IMR-90 (cell line): ENCODE measurements at regions of chr17 and their contacts with region 1.

Region 1: GRCh38 chr17:48555258-48556228 is 10.6 kb upstream of the HOXB2 start:
- DNase-seq: peak; percentile 99
- ATAC-seq: peak; percentile 22
- H3K4me3 ChIP-seq: peak overlapping the region; percentile 48
- H3K27ac ChIP-seq: peak overlapping the region; percentile 93
- H3K4me1 ChIP-seq: peaks cover 56% of the 10 kb centered on the region
- H3K27me3 ChIP-seq: no peaks in the 10 kb centered on the region
- CTCF ChIP-seq: 0 out of 2 replicates have a peak, but pooled peaks have one; percentile 4
- POLR2A ChIP-seq: no peak
- RAD21 ChIP-seq: no peak; the same call in 1 of the 2 replicates

Region 2: DNA sequence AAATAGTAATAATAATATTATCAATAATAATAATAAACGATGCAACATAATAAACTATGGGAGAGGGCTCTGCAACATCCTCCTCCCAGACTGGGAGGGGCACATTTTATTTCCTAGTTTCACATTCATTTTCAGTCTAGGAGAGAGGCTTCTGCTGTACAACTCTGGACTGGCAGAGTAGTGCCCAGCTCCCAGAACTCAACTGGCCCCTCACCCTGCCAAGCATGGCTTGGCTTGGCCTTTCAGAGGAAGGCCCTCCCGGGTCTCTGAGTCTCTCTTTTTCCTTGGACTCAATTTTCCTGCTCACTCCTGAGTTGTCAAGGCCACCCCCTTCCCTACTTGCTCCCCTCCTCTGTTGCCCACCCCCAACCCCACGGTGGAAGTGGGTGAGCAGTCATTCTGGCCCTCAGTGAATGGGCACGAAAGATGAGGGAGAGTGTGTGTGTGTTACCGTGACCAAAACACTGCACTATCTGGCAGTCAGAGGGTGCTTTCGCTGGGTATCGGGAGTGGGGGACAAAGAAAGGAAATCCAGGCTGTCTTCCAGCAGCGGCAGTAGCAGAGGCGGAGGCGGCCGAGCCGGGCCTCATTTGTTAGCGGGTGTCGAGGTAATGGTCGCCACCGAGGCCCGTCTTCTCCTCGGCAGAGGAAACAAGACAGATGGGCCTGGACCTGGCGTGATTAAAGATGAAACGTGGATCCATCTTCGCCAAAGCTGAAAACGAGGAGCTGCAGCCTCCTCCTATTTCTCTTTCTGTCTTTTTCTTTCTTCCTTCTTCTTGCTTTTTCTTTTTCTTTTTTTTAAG is 20.3 kb after region 1 on chr17:
- CTCF ChIA-PET with region 1: no interaction called
- POLR2A ChIA-PET with region 1: interaction called, 3 read pairs
- dilution Hi-C with region 1: no loop called
- in situ Hi-C with region 1: no loop called
- intact Hi-C with region 1: loop called (anchors 2 kb)
- DNase-seq: peak; percentile 67
- ATAC-seq: no peak
- H3K4me3 ChIP-seq: peak overlapping the region; percentile 40
- H3K27ac ChIP-seq: peak overlapping the region; percentile 99
- H3K4me1 ChIP-seq: peaks cover 20% of the 10 kb centered on the region
- H3K27me3 ChIP-seq: no peaks in the 10 kb centered on the region
- CTCF ChIP-seq: no peak
- POLR2A ChIP-seq: 0 out of 2 replicates have a peak, but pooled peaks have one; percentile 27
- RAD21 ChIP-seq: no peak

Region 3: GRCh38 chr17:48586355-48587258 is 31.1 kb after region 1 on chr17:
- CTCF ChIA-PET with region 1: interaction called, 8 read pairs
- POLR2A ChIA-PET with region 1: interaction called, 14 read pairs
- dilution Hi-C with region 1: no loop called
- in situ Hi-C with region 1: no loop called
- intact Hi-C with region 1: no loop called
- DNase-seq: peak; percentile 41
- ATAC-seq: no peak
- H3K4me3 ChIP-seq: peak overlapping the region; percentile 91
- H3K27ac ChIP-seq: peak overlapping the region; percentile 99
- H3K4me1 ChIP-seq: peaks cover 12% of the 10 kb centered on the region
- H3K27me3 ChIP-seq: no peaks in the 10 kb centered on the region
- CTCF ChIP-seq: no peak
- POLR2A ChIP-seq: no peak
- RAD21 ChIP-seq: no peak

Region 4: DNA sequence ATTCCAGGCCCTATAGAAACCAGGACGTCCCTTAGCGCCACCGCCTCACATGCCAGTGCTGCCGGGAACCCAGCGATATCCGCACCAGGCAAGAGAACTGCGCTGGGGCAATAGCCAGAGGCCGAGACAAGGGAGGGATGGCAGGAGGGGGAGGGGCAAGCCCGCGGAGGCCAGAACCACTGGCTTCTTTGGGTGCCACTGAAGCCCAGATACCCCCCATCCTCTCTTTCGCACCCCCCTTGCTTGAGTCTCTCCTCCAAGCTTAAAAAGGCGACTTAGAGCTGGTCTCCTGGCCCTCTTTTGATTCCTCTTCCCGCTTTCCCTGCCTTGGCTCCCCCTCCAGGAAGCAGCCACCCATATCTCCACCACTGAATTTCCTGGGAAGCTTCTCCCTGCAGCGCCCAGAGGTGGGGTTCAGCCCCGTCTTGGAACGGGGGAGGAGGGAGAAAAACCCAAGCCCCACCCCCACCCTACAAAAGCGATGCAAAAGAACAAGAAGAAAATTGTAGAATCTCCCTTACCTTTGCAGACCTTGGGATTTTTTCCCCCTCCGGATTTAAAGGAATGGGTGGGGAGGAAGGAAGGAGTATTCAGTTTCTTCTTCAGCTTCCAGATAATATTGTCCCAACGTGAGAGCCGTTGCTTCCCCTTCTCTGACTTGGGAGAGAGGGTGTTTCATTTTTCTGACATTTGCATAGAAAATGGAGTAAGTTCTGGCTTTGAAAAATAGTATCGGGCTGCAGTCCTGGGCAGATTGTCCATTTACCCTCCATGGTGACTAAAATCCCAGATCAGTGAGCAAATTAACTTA is 48.6 kb after region 1 on chr17:
- CTCF ChIA-PET with region 1: no interaction called
- POLR2A ChIA-PET with region 1: no interaction called
- dilution Hi-C with region 1: no loop called
- in situ Hi-C with region 1: no loop called
- intact Hi-C with region 1: no loop called
- DNase-seq: no peak
- ATAC-seq: no peak
- H3K4me3 ChIP-seq: no peak overlapping the region
- H3K27ac ChIP-seq: no peak overlapping the region
- H3K4me1 ChIP-seq: peaks cover 5% of the 10 kb centered on the region
- H3K27me3 ChIP-seq: no peaks in the 10 kb centered on the region
- CTCF ChIP-seq: no peak
- POLR2A ChIP-seq: no peak
- RAD21 ChIP-seq: no peak